ENCODE measurements at regions of chr12 and their contacts with region 1.

Region 1: DNA sequence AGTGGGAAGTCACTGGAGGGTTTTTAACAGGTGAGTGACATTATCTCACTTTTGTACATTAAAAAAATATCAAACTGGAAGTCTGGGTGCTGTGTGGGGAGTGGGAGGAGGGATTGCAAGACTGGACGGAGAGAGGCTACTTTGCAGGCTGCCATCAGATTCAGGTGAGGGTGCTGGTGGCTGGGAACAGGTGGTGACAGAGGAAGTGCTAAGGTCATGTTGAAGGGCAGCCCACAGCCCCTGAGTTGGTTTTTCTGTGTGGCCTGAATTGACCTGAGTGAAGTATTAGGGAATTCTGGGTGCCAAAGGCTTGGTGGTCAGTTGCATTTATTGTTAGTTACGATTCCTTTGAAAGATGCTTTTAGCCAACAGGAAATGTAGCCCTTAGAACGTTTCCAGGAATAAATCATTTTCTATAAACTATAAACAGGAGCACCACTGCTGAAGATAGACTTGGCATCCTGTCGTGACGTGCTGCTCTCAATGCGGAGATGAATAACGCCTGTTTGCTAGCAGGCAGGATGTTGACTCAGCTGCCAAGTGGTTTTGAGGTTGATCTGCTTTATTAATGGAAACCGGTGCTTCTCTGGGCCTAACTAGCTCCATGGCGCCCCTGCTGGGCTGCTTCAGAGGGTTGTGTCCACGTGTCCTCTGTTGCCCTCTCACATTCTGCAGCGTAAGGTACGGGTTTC is 707.5 kb upstream of the TMEM132C start:
- DNase-seq: peak; percentile 84
- H3K4me3 Mint-ChIP-seq: peak overlapping the region; percentile 51
- H3K27ac Mint-ChIP-seq: peak overlapping the region; percentile 98
- H3K4me1 Mint-ChIP-seq: peaks cover 60% of the 10 kb centered on the region
- H3K27me3 Mint-ChIP-seq: no peaks in the 10 kb centered on the region

Region 2: GRCh38 chr12:127270193-127270592 is 289.3 kb before region 1 on chr12:
- intact Hi-C with region 1: no loop called
- DNase-seq: no peak
- H3K4me3 Mint-ChIP-seq: no peak overlapping the region
- H3K27ac Mint-ChIP-seq: no peak overlapping the region
- H3K4me1 Mint-ChIP-seq: no peaks in the 10 kb centered on the region
- H3K27me3 Mint-ChIP-seq: no peaks in the 10 kb centered on the region

Region 3: DNA sequence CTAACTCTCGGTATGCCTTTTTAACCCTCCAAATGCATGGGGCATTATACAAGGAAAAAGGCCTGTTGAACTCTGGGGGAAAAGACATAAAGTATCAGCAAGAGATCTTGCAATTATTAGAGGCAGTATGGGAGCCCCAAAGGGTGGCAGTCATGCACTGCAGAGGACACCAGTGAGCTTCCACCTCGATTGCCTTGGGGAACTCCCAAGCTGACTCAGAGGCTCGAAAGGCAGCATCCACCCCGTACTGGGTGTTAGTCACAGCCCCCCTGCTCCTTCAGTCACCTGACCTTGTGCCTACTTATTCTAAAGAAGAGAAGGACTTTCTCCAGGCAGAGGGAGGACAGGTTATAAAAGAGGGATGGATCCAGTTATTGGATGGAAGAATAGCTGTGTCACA is 74.0 kb before region 1 on chr12:
- intact Hi-C with region 1: loop called (anchors 2 kb)
- DNase-seq: peak; percentile 14
- H3K4me3 Mint-ChIP-seq: no peak overlapping the region
- H3K27ac Mint-ChIP-seq: no peak overlapping the region
- H3K4me1 Mint-ChIP-seq: peaks cover 10% of the 10 kb centered on the region
- H3K27me3 Mint-ChIP-seq: no peaks in the 10 kb centered on the region

Region 4: DNA sequence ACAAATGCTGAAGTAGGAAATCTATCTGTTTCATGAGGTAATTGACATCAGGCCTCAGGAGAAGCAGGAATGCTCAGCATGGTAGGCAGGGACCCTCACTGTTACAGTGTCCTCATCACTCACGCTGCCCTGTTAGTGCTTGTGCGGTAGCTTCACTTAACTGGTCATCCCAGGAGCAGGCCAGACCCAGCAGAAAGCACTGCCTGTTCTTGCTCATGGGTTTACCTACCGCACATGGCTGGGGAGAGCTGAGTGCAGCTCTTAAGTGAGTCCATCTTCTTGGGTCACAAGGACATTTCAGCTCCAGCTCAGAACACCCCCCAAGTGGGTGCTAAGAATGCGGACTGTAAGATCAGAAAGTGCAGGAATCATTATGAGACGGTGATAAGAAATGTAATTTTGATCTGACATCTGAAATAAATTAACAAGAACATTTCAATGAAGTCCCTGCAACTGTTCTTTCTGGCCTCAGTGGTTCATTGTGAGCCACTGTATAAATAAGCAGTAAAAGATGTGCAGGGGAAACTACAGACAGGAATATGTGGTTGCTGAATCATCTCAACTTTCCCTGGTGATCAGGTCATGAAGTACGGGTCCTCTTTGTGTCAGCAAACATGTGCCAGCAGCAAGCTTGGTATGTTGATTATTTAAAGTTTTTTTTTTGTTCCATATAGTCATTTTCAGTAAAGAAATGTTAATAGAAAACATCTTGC is 50.3 kb before region 1 on chr12:
- intact Hi-C with region 1: loop called (anchors 1 kb)
- DNase-seq: no peak
- H3K4me3 Mint-ChIP-seq: no peak overlapping the region
- H3K27ac Mint-ChIP-seq: peak overlapping the region; percentile 26
- H3K4me1 Mint-ChIP-seq: peaks cover 12% of the 10 kb centered on the region
- H3K27me3 Mint-ChIP-seq: no peaks in the 10 kb centered on the region